ENCODE measurements at regions of chr5 and their contacts with region 1.

Region 1: DNA sequence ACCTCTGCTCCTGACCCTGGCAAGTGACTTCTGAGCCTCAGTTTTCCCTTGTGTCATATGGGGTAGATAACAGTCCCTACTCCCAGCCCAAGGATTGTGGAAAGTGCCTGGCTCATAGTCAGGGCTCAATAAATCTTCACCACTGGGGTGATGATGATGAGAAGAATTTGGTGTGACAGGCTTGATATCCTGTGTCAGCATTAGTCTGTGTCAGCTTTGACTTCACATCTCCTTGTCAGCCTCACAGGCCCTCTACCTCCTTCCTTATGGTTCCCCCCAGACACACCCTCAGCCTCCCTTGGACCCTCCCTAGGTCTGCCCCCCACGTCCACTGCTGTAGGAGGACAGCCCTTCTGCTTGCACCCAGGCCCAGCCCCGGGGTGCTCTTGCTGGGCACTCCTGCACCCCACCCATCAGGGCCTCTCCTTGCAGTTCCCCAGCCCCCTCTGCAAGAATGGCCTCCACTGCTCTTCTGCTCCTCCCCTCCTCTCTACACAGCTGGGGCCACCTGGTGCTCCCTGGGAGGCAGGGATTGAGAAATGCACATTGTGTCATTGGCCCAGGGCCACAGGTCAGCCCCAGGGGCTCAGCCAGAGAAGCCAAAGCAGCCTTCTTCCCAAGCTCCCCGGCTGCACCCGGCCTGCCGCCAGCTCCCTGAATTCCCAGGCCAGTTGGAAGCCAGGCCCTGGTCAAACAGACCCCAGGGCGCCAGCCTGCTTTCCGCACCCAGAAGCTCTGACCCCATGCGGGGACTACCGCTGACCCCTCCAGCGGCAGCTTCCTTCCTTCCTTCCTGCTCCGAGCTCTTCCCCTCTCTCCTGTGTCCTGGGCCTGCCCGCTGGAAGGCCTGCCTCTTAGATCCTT is 7.7 kb downstream of the FGFR4 start:
- DNase-seq: peak in 1 of 2 donors; percentile 72
- H3K4me3 ChIP-seq: no peak overlapping the region
- H3K27ac ChIP-seq: peak overlapping the region in 1 of 2 donors; percentile 10
- H3K4me1 ChIP-seq: no peaks in the 10 kb centered on the region
- H3K27me3 ChIP-seq: no peaks in the 10 kb centered on the region
- CTCF ChIP-seq: no peak
- POLR2A ChIP-seq: no peak

Region 2: DNA sequence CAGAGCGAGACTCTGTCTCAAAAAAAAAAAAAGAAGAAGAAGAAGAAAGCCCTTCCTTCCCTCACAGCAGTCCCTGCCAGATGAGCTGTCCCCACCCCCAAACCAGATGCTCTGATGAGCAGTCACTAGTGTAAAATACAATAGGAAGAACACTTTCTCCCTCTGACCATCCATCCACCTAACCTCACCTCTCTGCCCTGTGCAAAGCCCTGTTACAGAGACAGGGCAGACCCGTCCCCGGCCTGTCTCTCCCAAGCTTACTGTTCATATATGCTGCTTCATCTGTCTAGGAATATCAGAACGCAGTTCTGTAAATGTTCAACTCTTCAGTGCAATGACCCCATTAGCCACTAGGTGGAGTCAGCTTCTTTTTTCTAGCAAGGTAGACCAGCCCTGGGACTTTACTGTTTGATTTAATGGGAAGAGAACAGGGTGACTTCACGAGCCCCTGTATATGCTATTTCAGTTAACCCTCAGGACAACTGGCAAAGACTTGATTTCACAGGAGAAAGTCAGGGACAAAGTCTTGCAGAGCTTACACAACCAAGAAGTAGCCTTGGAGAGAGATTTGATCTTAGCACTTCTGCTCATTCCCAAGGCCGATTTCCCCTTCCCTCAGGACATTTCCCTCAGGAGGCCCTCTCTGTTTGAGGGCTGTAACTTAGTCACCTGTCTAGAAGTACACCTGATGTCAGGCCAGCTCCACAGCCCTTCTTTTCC is 22.6 kb before region 1 on chr5:
- intact Hi-C with region 1: loop called (anchors 1 kb)
- DNase-seq: peak in 1 of 2 donors; percentile 50
- H3K4me3 ChIP-seq: no peak overlapping the region
- H3K27ac ChIP-seq: no peak overlapping the region
- H3K4me1 ChIP-seq: no peaks in the 10 kb centered on the region
- H3K27me3 ChIP-seq: no peaks in the 10 kb centered on the region
- CTCF ChIP-seq: peak; percentile 73 to 87 (median 80)
- POLR2A ChIP-seq: no peak

Region 3: DNA sequence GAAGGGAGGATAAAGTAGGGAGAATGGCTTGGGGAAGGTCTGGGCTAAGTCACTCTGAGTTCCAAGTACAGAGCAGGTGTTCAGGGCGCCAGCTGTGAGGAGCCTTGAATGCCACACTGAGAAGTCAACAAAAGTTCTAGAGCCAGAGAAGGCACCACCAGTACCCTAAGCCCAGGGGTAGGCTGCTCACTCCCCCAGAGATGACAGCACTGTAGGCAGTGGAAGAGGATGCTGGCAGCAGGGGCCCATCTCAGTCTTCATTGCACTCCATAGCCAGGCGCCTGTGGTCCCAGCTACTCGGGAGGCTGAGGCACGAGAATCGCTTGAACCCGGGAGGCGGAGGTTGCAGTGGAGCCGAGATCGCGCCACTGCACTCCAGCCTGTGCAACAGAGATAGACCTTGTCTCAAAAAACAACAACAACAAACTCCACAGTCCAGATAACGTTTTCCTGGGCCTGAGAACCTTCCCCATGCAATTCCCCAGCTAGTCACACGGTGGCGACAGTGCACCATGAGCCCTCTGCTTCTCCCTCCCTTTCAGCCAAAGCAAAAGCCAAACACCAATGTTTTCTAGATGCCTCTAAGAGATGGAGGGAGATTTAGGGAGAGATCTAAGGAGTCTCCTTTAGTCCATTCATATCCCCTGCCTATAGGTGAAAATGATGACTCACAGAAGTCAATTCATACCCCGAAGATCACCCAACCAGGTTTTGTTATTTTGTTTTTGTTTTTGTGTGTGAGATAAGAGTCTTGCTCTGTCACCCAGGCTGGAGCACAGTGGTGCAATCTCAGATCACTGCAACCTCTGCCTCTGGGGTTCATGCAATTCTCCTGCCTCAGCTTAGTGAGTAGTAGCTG is 19.3 kb after region 1 on chr5:
- intact Hi-C with region 1: no loop called
- DNase-seq: peak; percentile 53 to 78
- H3K4me3 ChIP-seq: no peak overlapping the region
- H3K27ac ChIP-seq: peak overlapping the region in 1 of 2 donors; percentile 23
- H3K4me1 ChIP-seq: no peaks in the 10 kb centered on the region
- H3K27me3 ChIP-seq: no peaks in the 10 kb centered on the region
- CTCF ChIP-seq: peak; percentile 89 to 98 (median 96)
- POLR2A ChIP-seq: no peak

Region 4: DNA sequence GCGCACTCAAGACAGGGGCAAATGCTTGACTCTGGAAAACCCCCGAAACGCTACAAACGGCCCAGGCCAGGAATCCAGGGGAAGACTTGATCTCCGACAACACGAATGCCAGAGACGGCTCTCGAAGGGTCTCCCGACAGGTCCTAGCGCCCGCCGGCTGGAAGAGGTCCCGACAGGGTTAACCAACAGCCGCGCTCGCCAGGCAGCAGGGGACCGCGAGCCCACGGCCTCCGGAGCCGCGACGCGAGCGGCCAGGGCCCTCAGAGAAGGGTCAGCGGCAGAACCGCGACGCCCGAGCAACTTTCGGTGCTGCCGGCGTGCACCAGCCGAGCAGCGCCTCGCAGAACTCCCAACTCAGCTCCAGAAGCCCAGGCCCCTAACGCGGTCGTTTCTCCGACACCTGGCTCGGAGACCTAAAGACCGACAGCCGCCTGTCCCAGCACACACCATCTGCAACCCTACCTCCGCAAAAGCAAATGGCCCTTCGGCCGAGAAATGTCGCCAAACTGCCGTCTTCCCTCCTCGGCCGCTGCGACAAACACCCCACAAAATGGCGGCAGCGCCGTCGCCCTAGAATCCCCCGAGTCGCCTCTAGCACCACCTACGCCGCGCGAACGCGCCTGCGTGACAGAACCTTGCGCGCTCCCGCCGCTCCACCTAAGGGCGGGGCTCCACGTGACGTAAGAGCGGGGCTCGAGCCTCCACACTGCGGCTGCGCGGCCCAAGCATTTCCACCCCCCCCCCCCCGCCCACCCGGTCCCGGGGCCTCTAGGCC is 1532.2 kb after region 1 on chr5 and contains the start of gene CLK4:
- intact Hi-C with region 1: loop called (anchors 5 kb)
- DNase-seq: peak; percentile 94 to 95
- H3K4me3 ChIP-seq: peak within 1 kb of the TSS; percentile 71 to 98 (median 87)
- H3K27ac ChIP-seq: peak within 1 kb of the TSS; percentile 98
- H3K4me1 ChIP-seq: peaks cover 0 to 5% of the 10 kb centered on the region in 2 donors
- H3K27me3 ChIP-seq: no peaks in the 10 kb centered on the region
- CTCF ChIP-seq: no peak
- POLR2A ChIP-seq: peak; percentile 56
- total RNA-seq, gene CLK4: 39.0 to 73.2 (median 43.3) TPM

Measured in breast epithelium (tissue), 4 donors.